Natural killer cell (primary cell): ENCODE measurements at regions of chr1 and their contacts with region 1.

Region 1: DNA sequence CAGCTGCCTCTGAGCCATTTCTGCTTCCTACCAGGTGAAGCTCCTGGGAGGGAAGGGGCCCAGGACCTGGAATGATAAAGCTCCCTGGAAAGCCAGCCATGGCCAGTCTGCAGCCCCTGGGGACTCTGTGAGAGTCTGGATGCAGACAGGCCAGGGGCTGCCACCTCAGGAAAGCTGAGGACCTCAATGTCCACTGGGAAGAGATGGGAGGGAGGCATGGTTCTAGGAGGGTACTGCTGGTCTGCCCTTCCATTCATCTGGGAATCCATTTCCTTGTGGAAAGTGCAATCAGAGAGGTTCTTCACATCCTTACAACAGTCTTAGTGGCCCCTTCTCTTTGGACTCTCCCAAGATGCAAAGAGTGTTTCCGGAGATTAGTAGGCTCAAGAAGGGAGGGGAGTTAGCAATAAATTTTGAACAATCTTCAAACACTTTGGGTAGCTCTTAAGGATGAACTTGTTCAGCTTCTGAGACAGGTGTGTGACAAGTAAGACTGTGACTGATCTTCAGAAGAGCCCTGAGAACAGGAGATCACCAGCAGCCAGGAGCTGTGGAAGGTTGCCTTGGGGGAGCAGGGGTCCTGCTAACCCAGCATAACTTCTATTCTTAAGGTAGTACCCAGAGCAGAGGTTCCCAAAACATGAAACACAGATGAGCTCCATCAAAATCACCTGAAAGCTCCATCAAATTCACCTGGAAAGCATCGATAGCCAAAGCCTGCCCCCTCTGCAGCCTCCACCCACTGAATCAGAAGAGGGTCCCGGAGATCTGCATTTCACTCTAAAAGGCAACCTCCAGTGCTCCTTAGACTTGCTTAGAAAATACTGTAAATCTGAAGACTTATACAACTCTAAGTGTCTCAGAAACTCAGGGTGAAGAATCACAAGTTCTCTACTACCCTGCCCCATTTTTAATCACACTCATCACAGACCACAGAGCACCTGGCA is 628 bp upstream of the LAX1 start:
- DNase-seq: peak in 1 of 2 donors; percentile 39
- ATAC-seq: no peak
- H3K4me3 ChIP-seq: peak overlapping the region; percentile 69
- H3K4me3 Mint-ChIP-seq: peak overlapping the region; percentile 98
- H3K27ac ChIP-seq: peak overlapping the region; percentile 90
- H3K27ac Mint-ChIP-seq: peak overlapping the region; percentile 97 to 99
- H3K4me1 ChIP-seq: peaks cover 48% of the 10 kb centered on the region
- H3K4me1 Mint-ChIP-seq: peaks cover 36 to 47% of the 10 kb centered on the region in 2 donors
- H3K27me3 ChIP-seq: no peaks in the 10 kb centered on the region
- H3K27me3 Mint-ChIP-seq: no peaks in the 10 kb centered on the region
- CTCF ChIP-seq: no peak

Region 2: GRCh38 chr1:203795441-203796235 is 31.3 kb after region 1 on chr1 and contains the starts of genes ZBED6 and ZC3H11A:
- intact Hi-C with region 1: loop called (anchors 5 kb)
- DNase-seq: peak; percentile 93 to 99
- ATAC-seq: peak; percentile 96 to 99 (median 98)
- H3K4me3 ChIP-seq: peak within 1 kb of the TSS; percentile 70
- H3K4me3 Mint-ChIP-seq: peak within 1 kb of the TSS; percentile 98
- H3K27ac ChIP-seq: peak within 1 kb of the TSS; percentile 87
- H3K27ac Mint-ChIP-seq: peak within 1 kb of the TSS; percentile 97 to 98
- H3K4me1 ChIP-seq: peaks cover 8% of the 10 kb centered on the region
- H3K4me1 Mint-ChIP-seq: peaks cover 45 to 49% of the 10 kb centered on the region in 2 donors
- H3K27me3 ChIP-seq: no peaks in the 10 kb centered on the region
- H3K27me3 Mint-ChIP-seq: no peaks in the 10 kb centered on the region
- CTCF ChIP-seq: no peak
- total RNA-seq, gene ZBED6: 36.4 to 41.3 (median 39.8) TPM
- total RNA-seq, gene ZC3H11A: 71.1 to 79.9 (median 78.2) TPM

Region 3: DNA sequence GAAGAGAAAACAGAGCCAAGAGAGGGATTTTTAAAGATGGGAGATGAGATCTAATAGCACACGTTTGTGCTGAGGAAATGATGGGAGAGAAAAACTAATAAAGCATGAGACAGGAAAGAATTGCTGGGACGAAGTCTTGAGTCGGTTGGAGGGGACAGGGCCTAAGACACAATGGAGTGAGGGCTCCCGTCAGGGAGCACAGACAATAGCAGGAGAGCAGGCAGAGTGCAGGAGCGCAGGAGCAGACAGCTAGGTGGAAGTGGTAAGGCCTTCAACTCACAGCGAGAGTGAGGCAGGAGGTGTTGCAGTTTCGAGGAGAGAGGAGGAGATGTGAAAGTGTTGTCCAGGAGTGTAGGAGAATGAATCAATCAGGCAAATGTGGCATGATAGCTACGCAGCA is 248.7 kb after region 1 on chr1:
- intact Hi-C with region 1: no loop called
- DNase-seq: no peak
- ATAC-seq: no peak
- H3K4me3 ChIP-seq: no peak overlapping the region
- H3K4me3 Mint-ChIP-seq: no peak overlapping the region
- H3K27ac ChIP-seq: no peak overlapping the region
- H3K27ac Mint-ChIP-seq: no peak overlapping the region
- H3K4me1 ChIP-seq: no peaks in the 10 kb centered on the region
- H3K4me1 Mint-ChIP-seq: no peaks in the 10 kb centered on the region
- H3K27me3 ChIP-seq: no peaks in the 10 kb centered on the region
- H3K27me3 Mint-ChIP-seq: no peaks in the 10 kb centered on the region
- CTCF ChIP-seq: no peak